ENCODE measurements at regions of chr6 and their contacts with region 1.

Region 1: DNA sequence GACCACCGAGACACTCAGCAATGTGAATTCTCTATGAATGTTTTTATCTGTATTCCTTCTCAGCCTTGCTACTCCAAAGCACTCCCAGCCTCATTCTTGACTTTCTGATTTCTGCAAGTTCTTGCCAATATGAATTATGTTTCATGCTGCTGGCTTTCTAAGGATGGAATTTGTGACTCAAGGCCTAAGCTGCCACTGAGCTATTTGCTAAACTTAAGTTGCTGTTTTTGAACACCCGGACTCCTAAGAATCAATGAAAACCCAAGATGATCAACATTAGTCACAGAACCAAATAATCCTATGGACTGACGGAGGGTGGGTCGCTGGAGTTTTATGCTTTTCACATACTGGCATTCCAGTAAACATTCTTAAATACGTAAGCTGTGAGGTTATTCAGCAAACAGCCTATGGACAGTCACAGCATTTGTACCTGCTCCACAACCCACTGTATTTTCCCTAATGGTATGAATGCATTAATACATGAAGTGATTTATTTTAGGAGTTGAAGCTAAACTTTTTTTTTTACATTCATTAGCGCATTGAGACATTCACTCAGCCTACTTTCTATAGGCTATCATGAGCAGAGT is 8.2 kb upstream of the PXDC1 start:
- DNase-seq: no peak
- ATAC-seq: no peak
- H3K4me3 ChIP-seq: no peak overlapping the region
- H3K27ac ChIP-seq: no peak overlapping the region
- H3K4me1 ChIP-seq: peaks cover 0 to 3% (median 0%) of the 10 kb centered on the region in 12 donors
- H3K27me3 ChIP-seq: no peaks in the 10 kb centered on the region
- CTCF ChIP-seq: no peak
- POLR2A ChIP-seq: no peak

Region 2: DNA sequence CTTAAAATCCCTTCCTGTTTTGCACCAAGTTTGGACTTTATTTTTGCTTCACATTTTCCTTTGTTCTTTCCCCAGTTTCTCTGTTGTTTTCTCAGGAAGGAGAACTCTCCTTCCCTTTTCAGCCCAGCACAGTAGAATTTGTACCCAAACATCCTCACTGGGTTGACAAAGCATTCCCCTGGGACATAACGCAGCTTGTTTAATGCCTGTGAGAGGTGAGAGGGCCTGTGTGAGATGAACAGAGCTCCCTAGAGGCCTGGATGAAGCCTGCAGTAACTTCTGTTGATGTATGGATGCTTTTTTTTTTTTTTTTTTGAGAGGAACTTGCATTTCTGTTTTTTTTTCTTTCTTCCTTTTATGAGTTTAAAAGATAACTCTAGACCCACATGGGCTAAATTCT is 198.0 kb before region 1 on chr6:
- intact Hi-C with region 1: no loop called
- DNase-seq: no peak
- ATAC-seq: no peak
- H3K4me3 ChIP-seq: no peak overlapping the region
- H3K27ac ChIP-seq: peak overlapping the region in 1 of 12 donors; percentile 17
- H3K4me1 ChIP-seq: peaks cover 0 to 11% (median 0%) of the 10 kb centered on the region in 12 donors
- H3K27me3 ChIP-seq: no peaks in the 10 kb centered on the region
- CTCF ChIP-seq: no peak
- POLR2A ChIP-seq: no peak

Region 3: DNA sequence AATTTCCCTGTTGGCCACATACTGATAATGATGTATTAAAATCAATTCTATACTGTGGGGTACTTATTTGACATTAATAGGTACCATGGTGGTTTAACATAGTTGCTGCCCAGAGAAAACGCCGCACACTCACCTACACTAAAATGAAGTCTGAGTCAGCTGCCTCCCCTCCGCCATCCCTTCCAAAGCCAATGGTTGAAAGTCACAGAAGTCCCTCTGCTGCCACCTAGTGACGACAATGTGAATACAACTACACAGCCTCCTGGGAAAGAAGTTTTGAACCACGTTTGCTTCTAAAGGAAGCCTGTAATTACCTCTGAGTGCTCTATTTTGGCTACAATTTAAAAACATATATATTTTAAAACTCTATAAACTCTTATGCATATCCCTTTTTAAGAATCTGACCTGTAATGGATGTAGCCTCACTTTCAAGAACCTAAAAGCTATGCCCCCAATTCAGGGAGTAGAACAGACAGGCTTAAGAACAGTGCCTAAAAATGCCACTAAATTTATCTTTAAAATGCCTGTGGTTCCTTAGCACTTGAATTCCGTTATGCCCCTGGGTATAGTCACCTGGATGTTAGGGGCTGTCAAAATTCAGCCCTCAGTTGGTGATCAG is 396.2 kb after region 1 on chr6:
- intact Hi-C with region 1: loop called in 1 of 10 experiments (anchors 5 kb)
- DNase-seq: peak in 4 of 5 donors; percentile 76 to 79 (median 76)
- ATAC-seq: peak; percentile 61 to 93 (median 88)
- H3K4me3 ChIP-seq: peak overlapping the region in 1 of 12 donors; percentile 5
- H3K27ac ChIP-seq: no peak overlapping the region
- H3K4me1 ChIP-seq: peaks cover 0 to 6% (median 0%) of the 10 kb centered on the region in 12 donors
- H3K27me3 ChIP-seq: no peaks in the 10 kb centered on the region
- CTCF ChIP-seq: peak; percentile 81 to 93 (median 84)
- POLR2A ChIP-seq: no peak

Measured in heart left ventricle (tissue), 16 donors.